Activated CD4-positive, alpha-beta T cell treated with anti-CD3 and anti-CD28 coated beads for 36 hours (primary cell): ENCODE measurements at regions of chr9 and their contacts with region 1.

Region 1: DNA sequence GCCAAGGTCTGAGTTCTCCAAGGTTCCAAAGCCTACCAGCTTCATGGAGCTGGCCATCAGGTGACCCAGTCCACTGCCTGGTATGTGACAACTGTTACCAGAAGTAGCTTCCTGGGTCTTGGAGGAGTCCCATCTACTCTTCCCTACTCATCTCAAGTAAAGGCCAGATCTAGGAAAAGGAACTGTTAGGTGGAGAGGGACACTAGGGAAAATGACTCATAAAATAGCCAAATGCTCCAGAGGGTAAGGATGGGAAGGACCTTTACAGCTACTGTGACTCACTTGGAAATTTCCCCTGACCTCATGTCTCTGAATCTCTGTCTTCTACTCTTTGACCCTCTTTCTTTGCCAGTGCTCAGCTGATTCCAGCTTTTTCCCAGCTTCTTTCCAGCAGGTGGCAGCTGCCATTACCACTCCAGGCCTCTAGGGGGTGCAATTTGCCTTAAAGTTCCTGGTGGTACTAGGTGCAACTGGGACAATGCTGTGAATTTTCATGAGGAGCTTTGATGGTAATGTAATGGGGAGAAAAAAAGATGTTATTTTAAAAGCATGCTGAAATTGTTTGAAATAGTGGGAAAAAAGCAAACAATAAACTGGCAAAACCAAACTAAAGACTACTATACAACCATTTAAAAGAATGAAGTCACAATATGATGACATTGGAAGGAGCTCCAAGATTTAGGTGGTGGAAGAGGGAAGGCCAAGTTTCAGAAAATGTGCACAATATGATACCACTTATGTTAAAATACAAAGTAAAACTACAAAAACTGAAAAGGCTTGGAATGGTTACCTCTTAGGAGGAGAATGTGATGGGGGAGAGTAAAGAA is 27.1 kb upstream of the MYORG start:
- DNase-seq: peak; percentile 76
- ATAC-seq: peak; percentile 16
- H3K4me3 Mint-ChIP-seq: no peak overlapping the region
- H3K27ac Mint-ChIP-seq: no peak overlapping the region
- H3K4me1 Mint-ChIP-seq: no peaks in the 10 kb centered on the region
- H3K27me3 Mint-ChIP-seq: no peaks in the 10 kb centered on the region

Region 2: GRCh38 chr9:34392511-34392910 is 11.3 kb before region 1 on chr9:
- CTCF ChIA-PET with region 1: interaction called, 17 read pairs
- POLR2A ChIA-PET with region 1: no interaction called
- intact Hi-C with region 1: no loop called
- DNase-seq: no peak
- ATAC-seq: no peak
- H3K4me3 Mint-ChIP-seq: no peak overlapping the region
- H3K27ac Mint-ChIP-seq: no peak overlapping the region
- H3K4me1 Mint-ChIP-seq: no peaks in the 10 kb centered on the region
- H3K27me3 Mint-ChIP-seq: no peaks in the 10 kb centered on the region

Region 3: DNA sequence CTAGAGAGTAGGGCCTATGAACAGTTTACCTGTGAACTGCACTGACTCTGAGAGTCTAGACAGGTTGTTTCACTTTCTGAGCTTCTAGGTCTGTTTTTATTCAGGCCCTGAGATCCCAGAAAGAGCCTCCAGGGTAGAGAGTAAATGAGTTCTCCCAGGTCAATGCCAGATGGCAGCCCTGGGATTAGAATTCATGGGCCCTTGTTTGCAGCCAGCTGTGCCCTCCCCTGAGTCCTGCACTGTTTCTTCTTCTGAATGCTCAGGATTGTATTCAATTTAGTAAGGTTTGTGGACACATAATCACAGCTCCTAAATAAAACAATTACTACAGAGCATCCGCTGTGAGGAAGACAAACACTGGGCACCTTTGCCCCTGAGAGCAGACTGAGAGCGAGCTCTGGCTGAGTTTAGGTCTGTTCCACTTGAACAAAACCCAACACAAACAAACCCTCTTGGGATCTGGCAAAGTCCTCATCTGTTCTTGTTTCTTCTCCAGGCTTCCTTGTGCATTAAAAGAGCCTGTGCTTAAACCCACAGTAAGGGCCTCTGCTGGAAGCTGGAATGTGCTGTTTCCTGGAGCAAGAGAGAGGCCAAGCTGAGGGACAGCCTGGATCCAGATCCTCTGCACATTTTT is 24.7 kb after region 1 on chr9:
- CTCF ChIA-PET with region 1: interaction called, 11 read pairs
- POLR2A ChIA-PET with region 1: no interaction called
- intact Hi-C with region 1: no loop called
- DNase-seq: no peak
- ATAC-seq: no peak
- H3K4me3 Mint-ChIP-seq: no peak overlapping the region
- H3K27ac Mint-ChIP-seq: no peak overlapping the region
- H3K4me1 Mint-ChIP-seq: no peaks in the 10 kb centered on the region
- H3K27me3 Mint-ChIP-seq: no peaks in the 10 kb centered on the region

Region 4: GRCh38 chr9:34500623-34501267 is 97.0 kb after region 1 on chr9:
- CTCF ChIA-PET with region 1: interaction called, 36 read pairs
- POLR2A ChIA-PET with region 1: no interaction called
- intact Hi-C with region 1: loop called (anchors 1 kb)
- DNase-seq: peak; percentile 90
- ATAC-seq: peak; percentile 99
- H3K4me3 Mint-ChIP-seq: no peak overlapping the region
- H3K27ac Mint-ChIP-seq: no peak overlapping the region
- H3K4me1 Mint-ChIP-seq: peaks cover 14% of the 10 kb centered on the region
- H3K27me3 Mint-ChIP-seq: peaks cover 9% of the 10 kb centered on the region

Region 5: GRCh38 chr9:34591248-34591916 is 187.6 kb after region 1 on chr9:
- CTCF ChIA-PET with region 1: interaction called, 13 read pairs
- POLR2A ChIA-PET with region 1: no interaction called
- intact Hi-C with region 1: loop called (anchors 1 kb)
- DNase-seq: peak; percentile 89
- ATAC-seq: peak; percentile 76
- H3K4me3 Mint-ChIP-seq: peak overlapping the region; percentile 57
- H3K27ac Mint-ChIP-seq: no peak overlapping the region
- H3K4me1 Mint-ChIP-seq: peaks cover 27% of the 10 kb centered on the region
- H3K27me3 Mint-ChIP-seq: peaks cover 66% of the 10 kb centered on the region